Tibial artery (tissue), 4 donors: ENCODE measurements at regions of chr11 and their contacts with region 1.

Region 1: DNA sequence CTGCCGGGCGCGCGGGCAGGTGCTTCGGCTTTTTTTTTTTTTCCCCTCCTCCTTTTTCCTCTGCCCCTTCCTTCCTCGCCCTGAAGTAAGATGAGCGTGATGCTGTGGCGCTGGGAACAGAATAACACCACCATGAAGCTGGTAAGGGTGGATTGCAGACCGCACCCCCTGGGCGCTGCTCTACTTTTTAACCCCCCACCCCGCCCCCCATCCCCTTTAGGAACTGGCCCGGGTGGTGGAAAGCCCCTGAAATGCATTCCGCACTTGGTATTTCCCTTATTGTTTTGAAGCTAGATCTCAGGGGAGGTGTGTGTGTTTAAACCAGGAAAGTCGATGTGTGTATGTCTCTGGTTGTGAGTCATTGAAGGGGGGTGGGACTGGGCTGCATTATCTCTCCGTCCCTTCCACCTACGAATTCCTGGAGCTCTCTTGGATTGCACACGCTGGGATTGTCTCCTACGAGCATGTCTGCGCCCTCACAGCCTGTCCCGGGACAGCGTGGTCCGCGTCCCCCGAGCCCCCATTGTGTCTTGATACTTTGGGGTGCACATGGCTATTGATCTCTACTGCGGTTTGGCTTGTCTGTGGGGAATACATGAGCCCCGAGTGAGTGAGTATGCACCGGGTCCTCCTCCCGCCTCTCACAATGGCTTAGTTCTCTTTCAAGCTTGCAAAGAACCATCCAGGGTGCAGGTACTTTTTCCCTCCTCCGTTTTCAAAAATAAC is 64.9 kb downstream of the NAV2 start:
- DNase-seq: no peak
- H3K4me3 ChIP-seq: peak overlapping the region; percentile 46 to 52
- H3K27ac ChIP-seq: peak overlapping the region; percentile 33 to 40
- H3K4me1 ChIP-seq: peaks cover 0 to 78% (median 38%) of the 10 kb centered on the region in 4 donors
- H3K27me3 ChIP-seq: no peaks in the 10 kb centered on the region
- CTCF ChIP-seq: no peak

Region 2: GRCh38 chr11:19134004-19134403 is 643.5 kb before region 1 on chr11:
- intact Hi-C with region 1: no loop called
- DNase-seq: no peak
- H3K4me3 ChIP-seq: no peak overlapping the region
- H3K27ac ChIP-seq: no peak overlapping the region
- H3K4me1 ChIP-seq: no peaks in the 10 kb centered on the region
- H3K27me3 ChIP-seq: no peaks in the 10 kb centered on the region
- CTCF ChIP-seq: no peak

Region 3: GRCh38 chr11:19739872-19740271 is 37.7 kb before region 1 on chr11:
- intact Hi-C with region 1: no loop called
- DNase-seq: no peak
- H3K4me3 ChIP-seq: no peak overlapping the region
- H3K27ac ChIP-seq: peak overlapping the region; percentile 48 to 98
- H3K4me1 ChIP-seq: peaks cover 7 to 89% (median 53%) of the 10 kb centered on the region in 4 donors
- H3K27me3 ChIP-seq: no peaks in the 10 kb centered on the region
- CTCF ChIP-seq: peak; percentile 23 to 29

Region 4: GRCh38 chr11:19879307-19880087 is 102.0 kb after region 1 on chr11:
- intact Hi-C with region 1: loop called (anchors 10 kb)
- DNase-seq: no peak
- H3K4me3 ChIP-seq: no peak overlapping the region
- H3K27ac ChIP-seq: no peak overlapping the region
- H3K4me1 ChIP-seq: peaks cover 0 to 25% (median 22%) of the 10 kb centered on the region in 4 donors
- H3K27me3 ChIP-seq: no peaks in the 10 kb centered on the region
- CTCF ChIP-seq: no peak